T-cell (primary cell): ENCODE measurements at regions of chr20 and their contacts with region 1.

Region 1: DNA sequence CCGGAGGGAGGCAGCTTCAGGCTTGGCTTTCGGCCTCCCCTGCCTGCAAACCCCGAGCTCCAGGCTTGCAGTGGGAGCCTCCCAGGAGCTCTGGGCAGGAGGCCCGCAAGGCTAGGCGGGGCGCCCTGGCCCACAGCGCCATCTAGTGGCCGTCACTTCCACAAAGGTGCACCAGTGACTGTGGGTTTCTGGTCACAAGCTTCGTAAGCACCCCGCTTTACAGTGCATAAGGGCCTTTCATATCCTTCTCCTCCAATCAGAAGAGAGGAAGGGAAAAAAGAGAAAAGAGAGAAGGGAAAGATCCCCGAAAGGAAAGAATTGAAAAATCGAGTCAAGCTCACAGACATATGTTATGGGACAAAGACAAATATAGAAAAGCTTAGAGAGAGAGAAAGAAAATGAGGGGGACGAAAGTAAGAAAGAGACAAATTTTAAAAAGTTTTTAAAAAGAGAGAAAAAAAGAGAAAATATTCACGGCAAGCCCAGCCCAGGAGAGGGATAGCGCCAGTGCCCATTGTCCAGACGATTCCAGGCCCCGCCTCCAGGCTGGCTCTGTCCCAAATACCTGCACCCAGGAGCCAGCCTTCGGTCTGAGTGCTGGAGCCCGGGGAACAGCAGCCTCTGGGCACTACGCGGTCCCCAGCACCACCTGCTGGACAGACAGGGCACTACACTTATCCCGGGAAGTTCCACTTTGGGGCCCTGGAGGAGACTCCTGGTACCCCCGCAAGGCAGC is 207.1 kb downstream of the PREX1 start:
- DNase-seq: peak; percentile 19 to 79 (median 60)
- ATAC-seq: peak; percentile 69 to 82 (median 76)
- H3K4me3 ChIP-seq: peak overlapping the region in 1 of 2 donors; percentile 19
- H3K4me3 Mint-ChIP-seq: peak overlapping the region; percentile 54 to 70 (median 55)
- H3K27ac ChIP-seq: no peak overlapping the region
- H3K27ac Mint-ChIP-seq: no peak overlapping the region
- H3K4me1 ChIP-seq: peaks cover 0 to 11% of the 10 kb centered on the region in 2 experiments
- H3K4me1 Mint-ChIP-seq: peaks cover 10 to 15% (median 12%) of the 10 kb centered on the region in 3 donors
- H3K27me3 ChIP-seq: peaks cover 0 to 4% of the 10 kb centered on the region in 2 experiments
- H3K27me3 Mint-ChIP-seq: no peaks in the 10 kb centered on the region

Region 2: DNA sequence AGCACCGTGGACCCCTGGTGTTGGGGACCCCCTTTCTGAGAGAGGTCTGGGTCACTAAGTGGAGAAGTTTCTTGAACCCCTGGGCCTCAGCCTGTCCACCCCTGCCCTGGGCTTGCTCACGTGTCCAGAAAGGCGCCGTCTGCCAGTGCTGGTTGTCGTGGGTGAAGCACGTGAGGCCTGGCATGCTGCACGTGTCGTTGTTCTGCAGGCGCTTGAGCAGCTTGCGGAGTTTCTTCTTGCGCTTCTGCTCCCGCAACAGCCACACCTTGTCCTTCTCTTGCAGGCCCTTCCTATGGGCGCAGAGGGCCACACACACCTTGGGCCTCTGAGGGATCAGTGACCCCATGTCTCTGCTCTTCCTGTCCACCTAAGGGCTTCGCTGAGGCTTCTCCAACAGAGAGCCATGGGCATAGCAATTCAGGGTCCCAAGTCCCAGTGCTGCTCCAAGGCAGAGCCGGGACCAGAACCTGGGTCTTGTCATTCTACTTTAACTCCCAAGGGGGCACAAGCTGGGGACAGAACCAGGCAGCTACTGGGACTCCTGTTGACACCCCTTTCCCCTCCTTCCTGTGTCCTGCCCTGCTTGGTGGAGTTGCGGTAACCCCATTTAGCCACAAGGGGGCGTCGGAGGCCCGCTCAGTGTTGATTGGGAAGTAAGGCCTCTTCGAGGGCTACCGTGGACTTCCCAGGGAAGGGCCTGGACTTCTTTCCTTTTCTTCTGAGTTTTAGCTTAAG is 957.2 kb before region 1 on chr20:
- CTCF ChIA-PET with region 1: interaction called, 6 to 21 read pairs
- POLR2A ChIA-PET with region 1: no interaction called
- DNase-seq: peak; percentile 39 to 80 (median 64)
- ATAC-seq: peak; percentile 74 to 80 (median 78)
- H3K4me3 ChIP-seq: no peak overlapping the region
- H3K4me3 Mint-ChIP-seq: no peak overlapping the region
- H3K27ac ChIP-seq: no peak overlapping the region
- H3K27ac Mint-ChIP-seq: no peak overlapping the region
- H3K4me1 ChIP-seq: peaks cover 0 to 7% of the 10 kb centered on the region in 2 experiments
- H3K4me1 Mint-ChIP-seq: peaks cover 4 to 9% (median 7%) of the 10 kb centered on the region in 3 donors
- H3K27me3 ChIP-seq: no peaks in the 10 kb centered on the region
- H3K27me3 Mint-ChIP-seq: no peaks in the 10 kb centered on the region

Region 3: DNA sequence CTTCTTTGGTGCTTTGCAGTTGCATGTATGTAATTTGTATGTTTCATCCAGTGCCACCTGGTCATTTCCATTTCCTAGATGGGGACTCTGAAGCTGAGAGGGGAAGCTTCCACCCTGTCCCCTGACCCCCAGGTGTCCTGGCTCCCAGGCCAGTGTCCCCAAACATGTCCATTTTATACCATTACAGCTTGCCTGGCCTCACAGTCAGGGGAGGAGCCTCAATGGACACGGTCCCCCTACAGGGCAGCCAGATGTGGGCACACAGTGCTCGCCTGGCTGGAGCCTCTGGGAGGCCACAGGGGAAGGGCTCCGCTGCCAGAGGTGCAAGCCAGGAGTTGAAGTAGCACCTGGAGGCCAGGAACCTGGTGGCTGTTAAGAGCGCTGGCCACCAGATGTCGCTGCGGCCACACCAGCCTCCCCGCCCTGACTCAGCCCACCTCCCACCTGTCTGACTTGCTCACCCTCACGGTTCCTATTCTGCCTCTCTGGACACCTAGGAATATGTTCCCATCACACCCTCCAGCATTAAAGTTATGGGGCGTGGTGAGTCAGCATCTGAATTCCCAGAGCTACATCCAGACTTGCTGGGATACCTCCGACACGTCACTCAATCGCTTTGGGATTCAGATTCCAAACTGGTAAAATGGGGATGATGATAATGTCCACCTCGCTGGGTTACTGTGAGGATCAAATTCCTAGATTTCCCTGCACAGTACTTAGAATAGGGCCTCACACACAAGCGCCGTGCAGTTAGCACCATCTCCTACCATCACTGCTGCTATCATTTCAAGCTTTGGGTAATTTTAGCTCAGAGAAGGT is 942.8 kb before region 1 on chr20:
- CTCF ChIA-PET with region 1: interaction called, 12 to 17 read pairs
- POLR2A ChIA-PET with region 1: interaction called in 1 of 2 experiments, 3 read pairs
- DNase-seq: peak in 34 of 35 experiments; percentile 4 to 71 (median 39)
- ATAC-seq: peak; percentile 51 to 71 (median 67)
- H3K4me3 ChIP-seq: no peak overlapping the region
- H3K4me3 Mint-ChIP-seq: no peak overlapping the region
- H3K27ac ChIP-seq: no peak overlapping the region
- H3K27ac Mint-ChIP-seq: no peak overlapping the region
- H3K4me1 ChIP-seq: peaks cover 0 to 7% of the 10 kb centered on the region in 2 experiments
- H3K4me1 Mint-ChIP-seq: peaks cover 0 to 3% (median 0%) of the 10 kb centered on the region in 3 donors
- H3K27me3 ChIP-seq: peaks cover 0 to 24% of the 10 kb centered on the region in 2 experiments
- H3K27me3 Mint-ChIP-seq: no peaks in the 10 kb centered on the region